CD4-positive, alpha-beta T cell (primary cell): ENCODE measurements at regions of chr2 and their contacts with region 1.

Region 1: DNA sequence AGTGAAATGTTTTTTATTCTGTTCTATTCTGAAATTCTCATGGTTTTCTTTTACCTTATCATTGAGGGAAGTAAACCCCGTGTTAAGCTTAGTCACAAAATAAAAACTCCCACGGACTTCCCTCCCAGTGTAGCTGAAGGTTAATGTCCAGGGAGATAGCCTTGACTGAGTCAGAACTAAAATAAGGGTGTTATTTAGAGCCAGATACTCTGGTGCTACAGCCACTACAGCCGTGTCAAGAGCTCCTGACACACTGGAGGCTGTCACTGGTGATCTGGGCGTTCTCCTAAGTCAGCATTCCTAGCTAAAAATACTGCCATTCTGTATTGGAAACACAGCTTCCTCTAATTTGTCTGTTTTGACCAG is 82.0 kb upstream of the RANBP2 start:
- DNase-seq: peak in 2 of 14 experiments; percentile 54 to 70
- ATAC-seq: no peak
- H3K4me3 ChIP-seq: no peak overlapping the region
- H3K4me3 Mint-ChIP-seq: no peak overlapping the region
- H3K27ac ChIP-seq: no peak overlapping the region
- H3K27ac Mint-ChIP-seq: no peak overlapping the region
- H3K4me1 ChIP-seq: peaks cover 50% of the 10 kb centered on the region
- H3K4me1 Mint-ChIP-seq: peaks cover 54% of the 10 kb centered on the region
- H3K27me3 ChIP-seq: no peaks in the 10 kb centered on the region
- H3K27me3 Mint-ChIP-seq: no peaks in the 10 kb centered on the region
- CTCF ChIP-seq: no peak

Region 2: GRCh38 chr2:108594132-108594981 is 42.9 kb before region 1 on chr2:
- CTCF ChIA-PET with region 1: interaction called, 13 read pairs
- POLR2A ChIA-PET with region 1: no interaction called
- intact Hi-C with region 1: no loop called
- DNase-seq: peak in 2 of 14 experiments; percentile 56 to 64
- ATAC-seq: no peak
- H3K4me3 ChIP-seq: no peak overlapping the region
- H3K4me3 Mint-ChIP-seq: no peak overlapping the region
- H3K27ac ChIP-seq: no peak overlapping the region
- H3K27ac Mint-ChIP-seq: no peak overlapping the region
- H3K4me1 ChIP-seq: peaks cover 5% of the 10 kb centered on the region
- H3K4me1 Mint-ChIP-seq: peaks cover 26% of the 10 kb centered on the region
- H3K27me3 ChIP-seq: no peaks in the 10 kb centered on the region
- H3K27me3 Mint-ChIP-seq: no peaks in the 10 kb centered on the region
- CTCF ChIP-seq: no peak

Region 3: DNA sequence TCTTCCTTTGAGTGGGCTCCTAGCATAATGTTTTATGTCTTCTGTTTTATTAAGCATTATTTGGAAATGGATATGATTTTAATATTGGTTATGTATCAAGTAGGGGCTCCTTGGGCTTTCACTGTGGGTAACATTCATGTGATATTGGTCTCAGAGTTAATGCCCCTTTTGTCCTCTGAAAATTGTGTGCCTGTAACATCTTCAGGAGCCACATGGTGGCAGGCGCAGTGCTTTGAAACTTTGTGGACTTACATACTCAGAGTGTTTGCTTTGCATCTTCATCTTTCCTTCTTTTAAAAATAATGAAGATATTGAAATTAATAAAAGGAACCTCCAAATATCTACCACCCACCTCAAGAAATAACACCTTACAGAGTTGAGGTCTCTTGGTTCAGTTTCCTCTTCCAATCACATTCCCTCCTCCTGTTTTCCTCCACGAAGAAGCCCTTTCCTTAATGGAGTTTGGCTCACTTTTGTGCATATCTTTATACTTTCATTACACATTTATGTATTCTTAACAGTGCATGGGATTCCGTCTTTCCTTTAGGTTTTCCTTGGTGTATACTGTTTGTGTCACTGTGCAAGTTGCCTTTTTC is 29.5 kb before region 1 on chr2:
- CTCF ChIA-PET with region 1: interaction called, 309 read pairs
- POLR2A ChIA-PET with region 1: interaction called, 16 read pairs
- intact Hi-C with region 1: loop called (anchors 1 kb)
- DNase-seq: peak; percentile 30 to 80 (median 54)
- ATAC-seq: peak; percentile 54
- H3K4me3 ChIP-seq: no peak overlapping the region
- H3K4me3 Mint-ChIP-seq: no peak overlapping the region
- H3K27ac ChIP-seq: no peak overlapping the region
- H3K27ac Mint-ChIP-seq: no peak overlapping the region
- H3K4me1 ChIP-seq: peaks cover 32% of the 10 kb centered on the region
- H3K4me1 Mint-ChIP-seq: peaks cover 44% of the 10 kb centered on the region
- H3K27me3 ChIP-seq: no peaks in the 10 kb centered on the region
- H3K27me3 Mint-ChIP-seq: no peaks in the 10 kb centered on the region
- CTCF ChIP-seq: peak; percentile 81

Region 4: DNA sequence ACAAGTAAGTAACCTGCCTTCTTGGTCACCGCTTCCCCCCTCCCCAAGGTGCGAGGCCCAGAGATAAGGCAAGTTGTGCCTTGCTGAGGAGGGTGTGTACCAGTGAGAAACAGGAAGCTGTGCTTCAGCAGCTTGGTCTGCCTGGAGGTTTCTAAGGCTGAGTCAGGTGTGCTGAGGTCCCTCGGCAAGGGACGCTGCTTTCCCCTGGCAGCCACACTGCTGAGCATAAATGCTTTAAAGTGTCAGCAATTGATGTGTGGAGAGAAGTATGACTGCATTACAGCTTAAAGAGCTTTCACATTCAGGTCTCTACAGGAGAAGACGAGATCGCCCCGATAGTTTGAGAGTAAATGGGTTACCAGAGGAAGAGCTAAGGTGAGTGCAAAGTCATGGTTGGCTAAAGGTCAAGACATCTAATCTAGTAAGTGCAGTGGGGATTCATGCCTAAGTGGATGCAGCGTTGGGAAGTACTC is 16.2 kb before region 1 on chr2:
- CTCF ChIA-PET with region 1: interaction called, 309 read pairs
- POLR2A ChIA-PET with region 1: interaction called, 14 read pairs
- intact Hi-C with region 1: loop called in 1 of 2 experiments (anchors 2 kb)
- DNase-seq: peak; percentile 64 to 92 (median 78)
- ATAC-seq: peak; percentile 91
- H3K4me3 ChIP-seq: peak overlapping the region; percentile 65
- H3K4me3 Mint-ChIP-seq: peak overlapping the region; percentile 89
- H3K27ac ChIP-seq: peak overlapping the region; percentile 73 to 81
- H3K27ac Mint-ChIP-seq: peak overlapping the region; percentile 90
- H3K4me1 ChIP-seq: peaks cover 61% of the 10 kb centered on the region
- H3K4me1 Mint-ChIP-seq: peaks cover 89% of the 10 kb centered on the region
- H3K27me3 ChIP-seq: no peaks in the 10 kb centered on the region
- H3K27me3 Mint-ChIP-seq: no peaks in the 10 kb centered on the region
- CTCF ChIP-seq: no peak

Region 5: DNA sequence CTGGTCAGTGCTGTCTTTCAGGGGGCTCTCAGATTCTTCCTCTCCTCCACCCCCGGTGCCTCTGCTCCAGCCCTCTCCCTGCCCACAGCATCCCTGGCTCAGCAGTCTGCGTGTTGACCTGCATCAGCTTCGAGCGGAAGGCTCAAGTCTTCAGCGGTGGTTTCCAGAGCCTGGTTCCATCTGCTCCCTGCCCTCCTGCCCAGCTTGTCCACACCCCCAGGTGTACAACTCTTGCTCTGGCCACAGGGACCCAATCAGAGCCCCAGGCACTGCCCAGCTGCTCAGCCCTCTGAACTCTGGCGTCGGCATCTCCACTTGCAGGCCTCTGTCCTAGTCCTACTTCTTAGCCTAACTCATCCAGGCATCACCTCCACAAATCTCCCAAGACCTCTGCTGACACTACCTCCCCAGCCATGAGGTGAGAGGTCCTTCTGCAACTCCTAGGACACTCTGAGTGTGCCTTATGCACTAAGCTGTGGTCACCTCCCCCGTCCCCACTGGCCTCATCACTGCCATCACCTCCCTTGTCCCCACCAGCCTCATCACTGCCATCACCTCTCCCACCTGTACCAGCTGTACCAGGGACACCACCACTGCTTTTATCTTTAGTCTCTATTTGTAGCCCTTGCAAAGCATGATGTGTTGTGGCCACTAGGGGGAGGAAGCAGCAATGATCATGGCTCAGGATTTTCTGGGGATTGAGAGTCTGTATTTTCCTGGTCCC is 290.8 kb after region 1 on chr2:
- CTCF ChIA-PET with region 1: no interaction called
- POLR2A ChIA-PET with region 1: no interaction called
- intact Hi-C with region 1: no loop called
- DNase-seq: peak in 13 of 14 experiments; percentile 8 to 72 (median 32)
- ATAC-seq: peak; percentile 73
- H3K4me3 ChIP-seq: no peak overlapping the region
- H3K4me3 Mint-ChIP-seq: no peak overlapping the region
- H3K27ac ChIP-seq: no peak overlapping the region
- H3K27ac Mint-ChIP-seq: no peak overlapping the region
- H3K4me1 ChIP-seq: peaks cover 6% of the 10 kb centered on the region
- H3K4me1 Mint-ChIP-seq: peaks cover 13% of the 10 kb centered on the region
- H3K27me3 ChIP-seq: no peaks in the 10 kb centered on the region
- H3K27me3 Mint-ChIP-seq: no peaks in the 10 kb centered on the region
- CTCF ChIP-seq: peak; percentile 82

Region 6: GRCh38 chr2:108968619-108969018 is 331.3 kb after region 1 on chr2:
- CTCF ChIA-PET with region 1: no interaction called
- POLR2A ChIA-PET with region 1: no interaction called
- intact Hi-C with region 1: no loop called
- DNase-seq: peak in 1 of 14 experiments; percentile 51
- ATAC-seq: no peak
- H3K4me3 ChIP-seq: no peak overlapping the region
- H3K4me3 Mint-ChIP-seq: peak overlapping the region; percentile 26
- H3K27ac ChIP-seq: no peak overlapping the region
- H3K27ac Mint-ChIP-seq: peak overlapping the region; percentile 82
- H3K4me1 ChIP-seq: peaks cover 75% of the 10 kb centered on the region
- H3K4me1 Mint-ChIP-seq: peaks cover 93% of the 10 kb centered on the region
- H3K27me3 ChIP-seq: no peaks in the 10 kb centered on the region
- H3K27me3 Mint-ChIP-seq: no peaks in the 10 kb centered on the region
- CTCF ChIP-seq: no peak

Region 7: GRCh38 chr2:109057686-109058085 is 420.4 kb after region 1 on chr2:
- CTCF ChIA-PET with region 1: no interaction called
- POLR2A ChIA-PET with region 1: no interaction called
- intact Hi-C with region 1: no loop called
- DNase-seq: peak in 7 of 14 experiments; percentile 24 to 61 (median 43)
- ATAC-seq: peak; percentile 97
- H3K4me3 ChIP-seq: no peak overlapping the region
- H3K4me3 Mint-ChIP-seq: peak overlapping the region; percentile 48
- H3K27ac ChIP-seq: no peak overlapping the region
- H3K27ac Mint-ChIP-seq: peak overlapping the region; percentile 70
- H3K4me1 ChIP-seq: peaks cover 29% of the 10 kb centered on the region
- H3K4me1 Mint-ChIP-seq: peaks cover 47% of the 10 kb centered on the region
- H3K27me3 ChIP-seq: no peaks in the 10 kb centered on the region
- H3K27me3 Mint-ChIP-seq: no peaks in the 10 kb centered on the region
- CTCF ChIP-seq: no peak

Region 8: GRCh38 chr2:109110170-109110569 is 472.9 kb after region 1 on chr2:
- CTCF ChIA-PET with region 1: no interaction called
- POLR2A ChIA-PET with region 1: no interaction called
- intact Hi-C with region 1: no loop called
- DNase-seq: no peak
- ATAC-seq: no peak
- H3K4me3 ChIP-seq: no peak overlapping the region
- H3K4me3 Mint-ChIP-seq: no peak overlapping the region
- H3K27ac ChIP-seq: no peak overlapping the region
- H3K27ac Mint-ChIP-seq: no peak overlapping the region
- H3K4me1 ChIP-seq: no peaks in the 10 kb centered on the region
- H3K4me1 Mint-ChIP-seq: peaks cover 1% of the 10 kb centered on the region
- H3K27me3 ChIP-seq: no peaks in the 10 kb centered on the region
- H3K27me3 Mint-ChIP-seq: no peaks in the 10 kb centered on the region
- CTCF ChIP-seq: no peak